CD4-positive, alpha-beta memory T cell (primary cell): ENCODE measurements at regions of chr12 and their contacts with region 1.

Region 1: GRCh38 chr12:26832822-26833742 is at the start of gene ITPR2:
- DNase-seq: peak; percentile 88 to 92 (median 89)
- H3K4me3 ChIP-seq: peak within 1 kb of the TSS; percentile 90 to 91
- H3K4me3 Mint-ChIP-seq: peak within 1 kb of the TSS; percentile 97 to 99 (median 99)
- H3K27ac ChIP-seq: peak within 1 kb of the TSS; percentile 69
- H3K27ac Mint-ChIP-seq: peak within 1 kb of the TSS; percentile 96 to 99 (median 99)
- H3K4me1 ChIP-seq: peaks cover 25% of the 10 kb centered on the region
- H3K4me1 Mint-ChIP-seq: peaks cover 31 to 55% (median 41%) of the 10 kb centered on the region in 4 donors
- H3K27me3 ChIP-seq: no peaks in the 10 kb centered on the region
- H3K27me3 Mint-ChIP-seq: no peaks in the 10 kb centered on the region
- total RNA-seq, gene ITPR2: 54.7 to 55.6 TPM

Region 2: GRCh38 chr12:26113853-26114719 is 719.0 kb before region 1 on chr12:
- CTCF ChIA-PET with region 1: no interaction called
- POLR2A ChIA-PET with region 1: no interaction called
- intact Hi-C with region 1: loop called (anchors 2 kb)
- DNase-seq: peak; percentile 51 to 66 (median 58)
- H3K4me3 ChIP-seq: peak overlapping the region in 1 of 2 donors; percentile 30
- H3K4me3 Mint-ChIP-seq: peak overlapping the region; percentile 74 to 85 (median 80)
- H3K27ac ChIP-seq: no peak overlapping the region
- H3K27ac Mint-ChIP-seq: peak overlapping the region; percentile 32 to 76 (median 55)
- H3K4me1 ChIP-seq: peaks cover 14% of the 10 kb centered on the region
- H3K4me1 Mint-ChIP-seq: peaks cover 4 to 12% (median 8%) of the 10 kb centered on the region in 4 donors
- H3K27me3 ChIP-seq: peaks cover 9% of the 10 kb centered on the region
- H3K27me3 Mint-ChIP-seq: peaks cover 33 to 40% of the 10 kb centered on the region in 2 donors

Region 3: GRCh38 chr12:26821212-26821701 is 11.8 kb before region 1 on chr12:
- CTCF ChIA-PET with region 1: interaction called, 7 read pairs
- POLR2A ChIA-PET with region 1: interaction called, 19 read pairs
- intact Hi-C with region 1: no loop called
- DNase-seq: no peak
- H3K4me3 ChIP-seq: no peak overlapping the region
- H3K4me3 Mint-ChIP-seq: no peak overlapping the region
- H3K27ac ChIP-seq: no peak overlapping the region
- H3K27ac Mint-ChIP-seq: no peak overlapping the region
- H3K4me1 ChIP-seq: no peaks in the 10 kb centered on the region
- H3K4me1 Mint-ChIP-seq: peaks cover 7 to 31% (median 14%) of the 10 kb centered on the region in 4 donors
- H3K27me3 ChIP-seq: no peaks in the 10 kb centered on the region
- H3K27me3 Mint-ChIP-seq: no peaks in the 10 kb centered on the region

Region 4: GRCh38 chr12:26853303-26854030 is 20.4 kb after region 1 on chr12:
- CTCF ChIA-PET with region 1: interaction called, 5 read pairs
- POLR2A ChIA-PET with region 1: interaction called, 3 read pairs
- intact Hi-C with region 1: loop called (anchors 1 kb)
- DNase-seq: peak; percentile 59 to 69 (median 67)
- H3K4me3 ChIP-seq: no peak overlapping the region
- H3K4me3 Mint-ChIP-seq: no peak overlapping the region
- H3K27ac ChIP-seq: no peak overlapping the region
- H3K27ac Mint-ChIP-seq: peak overlapping the region in 2 of 7 donors; percentile 10 to 14
- H3K4me1 ChIP-seq: peaks cover 4% of the 10 kb centered on the region
- H3K4me1 Mint-ChIP-seq: no peaks in the 10 kb centered on the region
- H3K27me3 ChIP-seq: no peaks in the 10 kb centered on the region
- H3K27me3 Mint-ChIP-seq: peaks cover 3 to 6% of the 10 kb centered on the region in 2 donors

Region 5: GRCh38 chr12:26937875-26938700 is 105.0 kb after region 1 on chr12 and contains the starts of genes FGFR1OP2 and INTS13:
- CTCF ChIA-PET with region 1: interaction called, 3 read pairs
- POLR2A ChIA-PET with region 1: interaction called, 10 read pairs
- intact Hi-C with region 1: loop called (anchors 1 kb)
- DNase-seq: peak; percentile 95 to 96 (median 96)
- H3K4me3 ChIP-seq: peak within 1 kb of the TSS; percentile 82 to 92
- H3K4me3 Mint-ChIP-seq: peak within 1 kb of the TSS; percentile 91 to 99 (median 98)
- H3K27ac ChIP-seq: peak within 1 kb of the TSS; percentile 89
- H3K27ac Mint-ChIP-seq: peak within 1 kb of the TSS; percentile 90 to 100 (median 99)
- H3K4me1 ChIP-seq: peaks cover 66% of the 10 kb centered on the region
- H3K4me1 Mint-ChIP-seq: peaks cover 44 to 85% (median 58%) of the 10 kb centered on the region in 4 donors
- H3K27me3 ChIP-seq: no peaks in the 10 kb centered on the region
- H3K27me3 Mint-ChIP-seq: no peaks in the 10 kb centered on the region
- total RNA-seq, gene FGFR1OP2: 92.2 to 94.2 TPM
- total RNA-seq, gene INTS13: 25.6 to 28.7 TPM

Region 6: GRCh38 chr12:27243804-27244683 is 411.0 kb after region 1 on chr12 and contains the start of gene STK38L:
- CTCF ChIA-PET with region 1: no interaction called
- POLR2A ChIA-PET with region 1: interaction called, 7 read pairs
- intact Hi-C with region 1: loop called (anchors 1 kb)
- DNase-seq: peak; percentile 95 to 97 (median 97)
- H3K4me3 ChIP-seq: peak within 1 kb of the TSS; percentile 85 to 87
- H3K4me3 Mint-ChIP-seq: peak within 1 kb of the TSS; percentile 97 to 99 (median 98)
- H3K27ac ChIP-seq: peak within 1 kb of the TSS; percentile 77
- H3K27ac Mint-ChIP-seq: peak within 1 kb of the TSS; percentile 93 to 99 (median 99)
- H3K4me1 ChIP-seq: peaks cover 27% of the 10 kb centered on the region
- H3K4me1 Mint-ChIP-seq: peaks cover 32 to 58% (median 47%) of the 10 kb centered on the region in 4 donors
- H3K27me3 ChIP-seq: no peaks in the 10 kb centered on the region
- H3K27me3 Mint-ChIP-seq: no peaks in the 10 kb centered on the region
- total RNA-seq, gene STK38L: 17.2 to 21.8 TPM